Activated B cell treated with CpG ODN at 0.5 μM for 24 hours (primary cell): ENCODE measurements at regions of chr11 and their contacts with region 1.

Region 1: GRCh38 chr11:32960553-32961164 is 55.0 kb upstream of the DEPDC7 start:
- DNase-seq: no peak
- ATAC-seq: no peak
- H3K4me3 Mint-ChIP-seq: no peak overlapping the region
- H3K27ac Mint-ChIP-seq: no peak overlapping the region
- H3K4me1 Mint-ChIP-seq: no peaks in the 10 kb centered on the region
- H3K27me3 Mint-ChIP-seq: no peaks in the 10 kb centered on the region
- CTCF ChIP-seq: no peak

Region 2: DNA sequence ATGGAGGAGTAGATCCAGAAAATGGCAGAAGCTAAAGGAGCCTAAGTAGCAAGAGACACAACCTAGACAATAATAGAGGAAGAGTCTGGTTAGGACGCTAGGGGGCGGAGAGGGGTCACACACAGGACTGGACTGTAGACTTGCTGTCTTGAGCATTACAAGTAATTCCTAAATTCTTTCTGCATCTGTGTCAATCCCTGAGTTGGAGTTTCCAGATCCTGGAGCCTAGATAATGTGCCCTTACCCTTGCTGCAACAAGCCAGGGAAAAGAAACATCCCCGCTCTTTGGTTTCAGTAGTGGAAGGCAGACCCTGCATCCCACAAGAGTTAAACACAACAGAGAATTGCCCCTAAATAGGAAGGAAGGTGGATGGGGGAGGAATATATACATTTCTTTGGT is 151.3 kb before region 1 on chr11:
- CTCF ChIA-PET with region 1: no interaction called
- POLR2A ChIA-PET with region 1: no interaction called
- intact Hi-C with region 1: loop called (anchors 1 kb)
- DNase-seq: no peak
- ATAC-seq: peak; percentile 66
- H3K4me3 Mint-ChIP-seq: no peak overlapping the region
- H3K27ac Mint-ChIP-seq: no peak overlapping the region
- H3K4me1 Mint-ChIP-seq: no peaks in the 10 kb centered on the region
- H3K27me3 Mint-ChIP-seq: no peaks in the 10 kb centered on the region
- CTCF ChIP-seq: no peak

Region 3: DNA sequence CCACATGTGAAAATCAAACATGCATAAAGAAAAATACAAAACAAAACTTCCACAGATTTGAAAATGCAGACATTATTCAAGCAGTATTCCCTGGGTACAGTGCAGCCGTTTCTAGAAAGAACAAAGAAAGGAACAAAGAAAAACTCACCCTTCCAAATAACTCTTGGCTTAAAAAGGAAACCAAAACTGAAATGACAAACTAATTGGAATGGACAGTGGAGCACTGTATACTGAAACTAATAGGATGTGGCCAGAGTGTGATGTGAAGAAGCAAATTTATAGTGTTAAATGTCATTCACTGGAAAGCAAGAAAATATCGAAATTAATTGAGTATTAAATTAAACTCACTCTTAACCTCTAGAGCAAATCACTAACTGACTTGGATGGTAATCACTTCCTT is 12.7 kb before region 1 on chr11:
- CTCF ChIA-PET with region 1: no interaction called
- POLR2A ChIA-PET with region 1: no interaction called
- intact Hi-C with region 1: no loop called
- DNase-seq: no peak
- ATAC-seq: no peak
- H3K4me3 Mint-ChIP-seq: no peak overlapping the region
- H3K27ac Mint-ChIP-seq: no peak overlapping the region
- H3K4me1 Mint-ChIP-seq: no peaks in the 10 kb centered on the region
- H3K27me3 Mint-ChIP-seq: no peaks in the 10 kb centered on the region
- CTCF ChIP-seq: no peak

Region 4: GRCh38 chr11:32987851-32988250 is 27.2 kb after region 1 on chr11:
- CTCF ChIA-PET with region 1: no interaction called
- POLR2A ChIA-PET with region 1: no interaction called
- intact Hi-C with region 1: no loop called
- DNase-seq: no peak
- ATAC-seq: no peak
- H3K4me3 Mint-ChIP-seq: no peak overlapping the region
- H3K27ac Mint-ChIP-seq: no peak overlapping the region
- H3K4me1 Mint-ChIP-seq: no peaks in the 10 kb centered on the region
- H3K27me3 Mint-ChIP-seq: no peaks in the 10 kb centered on the region
- CTCF ChIP-seq: no peak

Region 5: DNA sequence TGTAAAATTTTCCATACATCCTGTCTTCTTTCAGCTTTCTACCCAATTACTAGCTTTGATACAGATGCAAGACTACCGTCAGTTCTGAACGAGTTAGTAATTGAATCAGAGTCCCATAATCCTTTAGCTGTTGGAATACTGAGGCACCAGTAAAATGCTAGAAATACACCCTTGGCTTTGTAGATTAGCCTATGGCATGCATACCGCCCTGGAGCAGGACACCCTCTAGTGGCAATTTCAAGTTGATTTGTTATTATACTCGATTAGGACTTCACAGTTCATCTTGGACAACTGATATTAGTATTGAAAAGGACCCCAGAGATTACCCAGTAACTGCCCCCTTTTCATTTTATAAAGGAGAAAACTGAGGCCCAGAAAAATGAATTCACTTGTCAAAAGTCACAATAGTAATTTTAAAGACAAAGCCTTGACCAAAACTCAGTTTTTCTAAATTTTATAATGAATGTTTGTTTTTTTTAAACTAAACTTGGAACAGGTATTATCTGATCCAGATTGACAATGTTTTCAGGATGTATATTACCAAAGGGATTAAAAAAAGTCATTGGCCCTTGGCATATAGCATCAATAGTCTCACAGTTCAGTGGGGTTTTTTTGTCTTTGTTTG is 369.2 kb after region 1 on chr11:
- CTCF ChIA-PET with region 1: interaction called, 3 read pairs
- POLR2A ChIA-PET with region 1: no interaction called
- intact Hi-C with region 1: loop called (anchors 1 kb)
- DNase-seq: no peak
- ATAC-seq: peak; percentile 65
- H3K4me3 Mint-ChIP-seq: no peak overlapping the region
- H3K27ac Mint-ChIP-seq: no peak overlapping the region
- H3K4me1 Mint-ChIP-seq: peaks cover 14% of the 10 kb centered on the region
- H3K27me3 Mint-ChIP-seq: no peaks in the 10 kb centered on the region
- CTCF ChIP-seq: no peak

Region 6: DNA sequence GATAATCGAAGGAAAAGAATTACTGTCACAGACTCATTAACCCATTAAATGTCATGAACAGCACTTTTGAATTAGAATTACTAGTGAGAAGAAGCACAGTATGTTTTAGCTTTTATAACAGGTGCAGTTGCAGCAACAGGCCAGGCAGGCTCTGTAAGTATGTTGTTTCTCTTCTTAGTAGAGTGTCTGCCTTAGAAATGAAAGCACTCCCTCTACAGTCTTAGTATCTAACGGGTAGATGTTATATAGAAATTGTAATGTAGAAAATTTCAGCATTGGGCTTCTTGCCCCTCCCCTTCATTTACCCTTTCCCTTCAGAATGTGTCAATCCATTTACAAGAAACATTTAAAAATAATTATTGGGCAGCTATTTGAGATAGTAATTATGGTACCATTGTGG is 384.0 kb after region 1 on chr11:
- CTCF ChIA-PET with region 1: no interaction called
- POLR2A ChIA-PET with region 1: no interaction called
- intact Hi-C with region 1: loop called (anchors 5 kb)
- DNase-seq: no peak
- ATAC-seq: no peak
- H3K4me3 Mint-ChIP-seq: no peak overlapping the region
- H3K27ac Mint-ChIP-seq: peak overlapping the region; percentile 18
- H3K4me1 Mint-ChIP-seq: peaks cover 24% of the 10 kb centered on the region
- H3K27me3 Mint-ChIP-seq: no peaks in the 10 kb centered on the region
- CTCF ChIP-seq: no peak